Activated CD4-positive, alpha-beta memory T cell treated with anti-CD3 and anti-CD28 coated beads for 36 hours (primary cell): ENCODE measurements at regions of chr17 and their contacts with region 1.

Region 1: GRCh38 chr17:57463103-57463851 is 207.0 kb downstream of the MSI2 start:
- DNase-seq: peak; percentile 95
- H3K4me3 Mint-ChIP-seq: peak overlapping the region; percentile 57
- H3K27ac Mint-ChIP-seq: peak overlapping the region; percentile 96
- H3K4me1 Mint-ChIP-seq: peaks cover 68% of the 10 kb centered on the region
- H3K27me3 Mint-ChIP-seq: no peaks in the 10 kb centered on the region

Region 2: GRCh38 chr17:57255776-57256681 is 207.2 kb before region 1 on chr17 and contains the start of gene MSI2:
- CTCF ChIA-PET with region 1: no interaction called
- POLR2A ChIA-PET with region 1: no interaction called
- intact Hi-C with region 1: loop called (anchors 2 kb)
- DNase-seq: peak; percentile 90
- H3K4me3 Mint-ChIP-seq: peak within 1 kb of the TSS; percentile 85
- H3K27ac Mint-ChIP-seq: peak within 1 kb of the TSS; percentile 85
- H3K4me1 Mint-ChIP-seq: peaks cover 41% of the 10 kb centered on the region
- H3K27me3 Mint-ChIP-seq: no peaks in the 10 kb centered on the region
- total RNA-seq, gene MSI2: 65.7 to 71.9 TPM

Region 3: GRCh38 chr17:57486873-57487301 is 23.6 kb after region 1 on chr17:
- CTCF ChIA-PET with region 1: no interaction called
- POLR2A ChIA-PET with region 1: no interaction called
- intact Hi-C with region 1: loop called (anchors 2 kb)
- DNase-seq: no peak
- H3K4me3 Mint-ChIP-seq: no peak overlapping the region
- H3K27ac Mint-ChIP-seq: no peak overlapping the region
- H3K4me1 Mint-ChIP-seq: peaks cover 49% of the 10 kb centered on the region
- H3K27me3 Mint-ChIP-seq: no peaks in the 10 kb centered on the region

Region 4: DNA sequence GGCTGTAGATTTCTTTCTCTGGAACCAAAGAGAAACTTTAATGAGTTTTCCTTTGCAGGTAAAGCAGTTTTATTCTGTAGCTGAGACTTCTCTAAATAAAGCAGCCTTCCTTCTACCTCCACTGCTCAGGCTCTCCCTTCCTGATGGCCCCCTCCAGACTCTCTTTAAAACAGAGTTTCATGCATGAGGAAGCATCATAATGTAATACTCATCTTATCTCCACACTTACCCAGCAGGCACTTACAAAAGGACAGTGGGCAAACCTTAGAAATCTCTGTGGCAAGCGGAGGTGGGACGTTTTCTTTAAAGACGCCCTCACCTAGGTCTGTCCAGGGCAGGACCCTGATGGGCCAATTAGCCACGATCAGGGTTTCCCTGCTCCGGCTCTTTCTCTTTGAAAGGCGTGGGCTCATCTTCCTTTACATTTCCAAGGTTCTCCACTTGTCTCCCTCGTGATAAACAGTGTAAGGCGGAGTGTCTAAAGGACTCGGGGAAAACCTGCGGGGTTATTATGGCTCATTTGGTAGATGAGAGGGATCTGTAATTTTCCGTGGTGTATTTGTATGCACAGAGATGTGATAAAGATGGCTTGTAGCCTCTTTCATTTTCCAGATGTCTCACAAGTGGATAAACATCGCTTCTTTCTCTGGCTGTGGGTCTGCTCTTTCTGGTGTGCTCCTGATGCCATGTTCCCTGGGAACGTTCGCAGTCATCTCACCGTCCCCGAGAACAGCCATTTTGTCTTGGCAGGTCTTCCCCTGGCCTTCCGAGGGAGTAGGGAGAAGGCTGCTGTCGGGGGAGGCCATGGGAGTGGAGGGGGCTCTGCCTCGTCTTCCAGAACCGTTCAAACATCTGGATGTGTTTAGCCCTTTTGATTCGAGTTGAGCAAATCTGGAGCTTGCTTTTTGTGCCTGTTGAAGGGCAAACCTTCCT is 42.8 kb after region 1 on chr17:
- CTCF ChIA-PET with region 1: no interaction called
- POLR2A ChIA-PET with region 1: interaction called, 4 read pairs
- intact Hi-C with region 1: loop called (anchors 2 kb)
- DNase-seq: no peak
- H3K4me3 Mint-ChIP-seq: no peak overlapping the region
- H3K27ac Mint-ChIP-seq: no peak overlapping the region
- H3K4me1 Mint-ChIP-seq: peaks cover 12% of the 10 kb centered on the region
- H3K27me3 Mint-ChIP-seq: no peaks in the 10 kb centered on the region

Region 5: DNA sequence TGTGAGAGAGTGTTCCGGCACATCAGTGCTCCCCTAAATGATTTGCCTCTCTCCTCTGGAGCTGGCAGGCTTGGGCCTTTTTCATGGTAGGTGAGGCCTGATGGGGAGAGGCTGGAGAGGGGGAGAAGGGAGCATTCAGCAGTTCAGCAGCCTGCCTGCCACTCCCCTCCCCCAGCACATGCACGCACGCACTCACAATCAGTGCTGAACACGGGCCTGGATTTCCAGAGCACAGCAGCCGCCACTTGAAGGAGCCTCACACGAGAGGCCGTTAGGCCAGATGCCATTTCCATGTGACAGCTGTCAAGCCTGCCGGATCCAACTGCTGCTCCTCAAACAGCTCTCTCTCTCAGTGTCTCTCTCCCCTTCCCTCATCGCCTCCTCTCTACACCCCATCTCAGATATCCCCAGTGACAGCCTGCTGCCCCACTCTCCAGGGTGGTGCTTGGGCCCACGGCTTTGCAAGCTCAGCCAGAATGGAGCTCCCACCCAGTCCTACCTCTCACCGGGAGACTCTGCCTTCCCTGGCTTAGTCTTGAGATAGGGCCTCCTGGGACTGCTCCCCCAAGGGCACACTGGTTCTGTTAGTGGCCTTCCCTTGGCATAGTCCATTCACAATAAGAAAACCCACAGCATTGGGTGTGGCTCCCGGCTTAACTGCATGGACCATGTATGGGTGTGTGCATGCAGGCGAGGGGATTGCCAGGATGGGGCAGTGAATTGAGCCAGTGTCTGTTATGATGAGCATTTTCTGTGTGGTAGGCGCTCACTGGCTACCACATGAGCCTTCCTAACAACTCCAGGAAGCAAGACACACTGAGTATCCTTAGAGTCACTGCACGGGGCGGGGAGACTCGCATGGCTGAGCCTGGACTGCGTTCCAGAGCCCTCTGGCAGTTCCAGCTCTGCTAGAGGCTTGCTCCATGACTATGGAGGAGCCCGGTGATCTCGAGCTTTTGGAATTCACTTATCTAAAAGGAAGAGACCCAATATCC is 55.6 kb after region 1 on chr17:
- CTCF ChIA-PET with region 1: no interaction called
- POLR2A ChIA-PET with region 1: no interaction called
- intact Hi-C with region 1: no loop called
- DNase-seq: no peak
- H3K4me3 Mint-ChIP-seq: no peak overlapping the region
- H3K27ac Mint-ChIP-seq: no peak overlapping the region
- H3K4me1 Mint-ChIP-seq: peaks cover 17% of the 10 kb centered on the region
- H3K27me3 Mint-ChIP-seq: no peaks in the 10 kb centered on the region

Region 6: DNA sequence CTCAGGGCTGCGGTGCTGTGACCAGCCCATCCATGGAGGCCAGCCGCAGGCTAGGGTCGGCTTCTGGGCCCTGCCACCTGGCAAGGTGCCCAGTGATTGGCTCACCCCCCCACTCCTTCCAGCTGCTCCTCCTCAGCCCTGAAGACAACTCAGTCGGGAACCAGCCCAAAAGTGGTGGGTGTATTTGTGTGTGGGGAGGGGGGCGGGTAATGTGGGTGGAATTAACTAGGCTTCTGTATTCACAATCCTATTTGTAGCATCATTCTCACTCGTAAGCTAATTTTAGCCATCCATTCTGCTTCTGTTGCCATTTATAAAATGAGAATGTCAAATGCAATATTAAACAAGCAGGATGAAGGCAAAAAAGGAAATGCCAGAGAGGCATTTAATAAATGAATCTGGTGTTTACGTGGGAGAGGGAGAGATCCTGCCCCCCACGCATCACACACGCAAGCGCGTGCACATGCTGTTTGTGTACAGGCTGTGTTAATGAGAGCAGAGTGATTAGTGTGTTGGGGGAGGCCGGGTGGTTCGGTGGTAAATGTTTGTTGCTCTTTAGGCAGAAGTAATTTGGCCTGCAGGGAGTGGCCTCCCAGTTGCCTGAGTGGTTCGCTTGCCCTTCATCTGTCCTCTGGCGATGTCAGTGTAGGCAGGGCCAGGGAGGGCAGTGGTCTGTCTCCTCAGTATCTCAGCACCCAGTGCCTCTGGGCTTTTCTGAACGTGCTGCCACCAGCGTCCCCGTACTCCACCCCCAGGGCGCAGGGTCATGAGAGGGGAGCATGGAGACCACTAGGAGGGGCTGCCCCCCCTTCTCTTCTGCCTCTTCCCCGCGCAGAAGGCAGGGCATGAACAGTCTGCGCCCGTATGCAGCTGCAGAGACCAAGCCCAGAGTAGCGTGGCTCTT is 141.7 kb after region 1 on chr17:
- CTCF ChIA-PET with region 1: no interaction called
- POLR2A ChIA-PET with region 1: no interaction called
- intact Hi-C with region 1: loop called (anchors 1 kb)
- DNase-seq: peak; percentile 54
- H3K4me3 Mint-ChIP-seq: peak overlapping the region; percentile 34
- H3K27ac Mint-ChIP-seq: peak overlapping the region; percentile 95
- H3K4me1 Mint-ChIP-seq: peaks cover 82% of the 10 kb centered on the region
- H3K27me3 Mint-ChIP-seq: no peaks in the 10 kb centered on the region